Ascending aorta (tissue), 2 donors: ENCODE measurements at regions of chr11 and their contacts with region 1.

Region 1: GRCh38 chr11:11977206-11977938 is 31.1 kb downstream of the DKK3 start:
- DNase-seq: peak in 1 of 2 donors; percentile 92
- H3K4me3 ChIP-seq: peak overlapping the region in 1 of 2 donors; percentile 17
- H3K27ac ChIP-seq: peak overlapping the region; percentile 81 to 83
- H3K4me1 ChIP-seq: peaks cover 43 to 90% of the 10 kb centered on the region in 2 donors
- H3K27me3 ChIP-seq: no peaks in the 10 kb centered on the region
- CTCF ChIP-seq: no peak

Region 2: GRCh38 chr11:11810764-11811726 is 166.3 kb before region 1 on chr11:
- intact Hi-C with region 1: no loop called
- DNase-seq: no peak
- H3K4me3 ChIP-seq: no peak overlapping the region
- H3K27ac ChIP-seq: no peak overlapping the region
- H3K4me1 ChIP-seq: peaks cover 0 to 9% of the 10 kb centered on the region in 2 donors
- H3K27me3 ChIP-seq: no peaks in the 10 kb centered on the region
- CTCF ChIP-seq: no peak

Region 3: DNA sequence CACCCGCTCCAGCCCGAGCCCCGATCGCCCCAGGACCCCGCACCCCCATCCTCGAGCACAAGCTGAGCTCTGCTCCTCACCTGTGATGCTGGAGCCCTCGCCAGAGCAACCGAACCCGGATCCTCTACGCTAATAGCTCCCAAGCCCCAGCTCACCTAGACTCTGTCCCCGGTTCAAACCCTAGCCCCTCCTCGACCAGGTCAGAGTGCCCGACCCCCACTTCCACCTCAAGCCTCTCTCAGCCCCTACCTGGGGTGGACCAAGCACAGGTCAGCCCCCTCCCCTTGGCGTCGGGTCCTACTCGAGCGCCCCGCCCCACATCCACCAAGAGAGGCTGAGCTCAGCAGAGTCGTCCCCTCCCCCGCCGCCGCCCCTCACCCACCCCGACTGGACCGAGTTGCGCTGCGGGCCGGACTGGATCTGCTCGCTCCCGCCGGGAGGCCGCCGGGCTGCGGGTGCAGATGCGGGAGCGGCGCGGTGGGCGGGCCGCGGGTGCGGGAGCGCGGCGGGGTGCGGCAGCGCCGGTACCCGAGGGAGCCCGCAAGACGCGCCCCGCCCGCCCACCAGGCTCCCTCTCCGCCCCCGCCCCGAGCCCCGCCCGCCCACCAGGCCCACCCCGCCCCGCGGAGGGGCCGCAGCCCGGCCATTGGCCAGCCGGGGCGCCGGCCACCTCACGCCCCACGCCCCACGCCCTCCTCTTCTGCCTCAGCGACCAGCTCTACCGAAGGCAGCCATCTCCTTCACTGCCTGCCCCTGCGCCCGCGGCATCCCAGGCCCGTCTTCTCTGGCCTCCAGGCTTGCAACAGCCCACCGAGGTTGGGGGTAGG is 31.6 kb after region 1 on chr11:
- intact Hi-C with region 1: loop called (anchors 2 kb)
- DNase-seq: peak in 1 of 2 donors; percentile 80
- H3K4me3 ChIP-seq: peak overlapping the region; percentile 74 to 82
- H3K27ac ChIP-seq: peak overlapping the region; percentile 86 to 88
- H3K4me1 ChIP-seq: peaks cover 3 to 30% of the 10 kb centered on the region in 2 donors
- H3K27me3 ChIP-seq: no peaks in the 10 kb centered on the region
- CTCF ChIP-seq: no peak

Region 4: DNA sequence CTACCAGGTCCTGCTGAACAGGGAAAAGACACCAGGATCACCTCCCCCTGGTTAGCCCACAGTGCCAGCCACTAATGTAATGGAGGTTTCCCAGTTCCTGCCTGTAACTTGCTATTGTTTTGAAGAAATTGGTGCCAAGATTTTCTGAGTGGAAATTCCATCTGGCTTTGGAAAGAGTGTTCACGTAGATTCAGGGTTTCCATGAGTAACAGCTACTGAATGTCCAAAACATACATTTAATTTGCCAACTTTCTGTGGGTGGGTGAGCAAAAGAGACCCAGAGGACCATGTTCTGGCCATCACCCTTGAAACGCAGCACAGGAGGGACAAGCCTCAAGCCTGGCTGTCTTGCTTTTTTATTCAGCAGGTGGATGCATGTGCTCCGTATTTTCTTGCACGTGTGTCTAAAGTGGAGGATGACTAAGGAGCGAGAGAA is 39.9 kb after region 1 on chr11:
- intact Hi-C with region 1: loop called (anchors 2 kb)
- DNase-seq: peak in 1 of 2 donors; percentile 85
- H3K4me3 ChIP-seq: no peak overlapping the region
- H3K27ac ChIP-seq: peak overlapping the region; percentile 72 to 78
- H3K4me1 ChIP-seq: peaks cover 16 to 33% of the 10 kb centered on the region in 2 donors
- H3K27me3 ChIP-seq: no peaks in the 10 kb centered on the region
- CTCF ChIP-seq: no peak

Region 5: GRCh38 chr11:12029738-12030363 is 52.5 kb after region 1 on chr11:
- intact Hi-C with region 1: no loop called
- DNase-seq: no peak
- H3K4me3 ChIP-seq: no peak overlapping the region
- H3K27ac ChIP-seq: no peak overlapping the region
- H3K4me1 ChIP-seq: no peaks in the 10 kb centered on the region
- H3K27me3 ChIP-seq: no peaks in the 10 kb centered on the region
- CTCF ChIP-seq: no peak

Region 6: GRCh38 chr11:12100841-12101242 is 123.5 kb after region 1 on chr11:
- intact Hi-C with region 1: no loop called
- DNase-seq: no peak
- H3K4me3 ChIP-seq: no peak overlapping the region
- H3K27ac ChIP-seq: no peak overlapping the region
- H3K4me1 ChIP-seq: peaks cover 0 to 15% of the 10 kb centered on the region in 2 donors
- H3K27me3 ChIP-seq: no peaks in the 10 kb centered on the region
- CTCF ChIP-seq: no peak